ENCODE measurements at regions of chr17 and their contacts with region 1.

Region 1: GRCh38 chr17:43576563-43577229 is 30.6 kb upstream of the ETV4 start:
- DNase-seq: peak; percentile 39 to 82 (median 68)
- ATAC-seq: peak; percentile 82 to 89 (median 86)
- H3K4me3 ChIP-seq: no peak overlapping the region
- H3K27ac ChIP-seq: no peak overlapping the region
- H3K4me1 ChIP-seq: peaks cover 0 to 2% (median 0%) of the 10 kb centered on the region in 3 donors
- H3K27me3 ChIP-seq: no peaks in the 10 kb centered on the region
- CTCF ChIP-seq: peak; percentile 80 to 91 (median 83)

Region 2: DNA sequence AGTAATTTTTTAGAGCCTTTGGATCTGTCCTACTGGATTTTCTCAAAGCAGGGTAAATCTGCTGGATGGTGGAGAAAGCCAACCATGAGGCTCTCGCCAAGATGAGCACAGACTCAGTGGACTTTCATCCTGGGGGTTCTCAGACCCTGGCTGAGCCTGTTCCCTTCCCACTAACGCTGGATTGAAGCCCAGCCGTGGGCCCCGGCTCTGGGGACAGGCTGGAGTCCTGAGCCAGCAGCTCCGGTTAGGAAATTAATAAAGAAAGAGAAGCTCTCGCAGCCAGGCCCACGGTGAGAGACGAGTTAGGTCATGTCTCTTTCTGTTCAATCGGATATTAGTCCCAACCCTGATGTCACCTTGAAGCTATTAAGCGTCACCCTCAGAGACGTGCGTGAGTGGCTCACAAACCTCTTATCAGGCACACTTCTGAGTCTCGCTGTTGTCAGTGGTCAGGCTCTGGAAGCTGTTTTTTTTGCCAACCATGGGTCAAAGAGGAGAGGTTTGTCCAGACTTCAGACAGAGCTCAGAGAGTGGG is 58.0 kb after region 1 on chr17:
- intact Hi-C with region 1: no loop called
- DNase-seq: no peak
- ATAC-seq: peak in 1 of 4 donors; percentile 29
- H3K4me3 ChIP-seq: no peak overlapping the region
- H3K27ac ChIP-seq: no peak overlapping the region
- H3K4me1 ChIP-seq: no peaks in the 10 kb centered on the region
- H3K27me3 ChIP-seq: no peaks in the 10 kb centered on the region
- CTCF ChIP-seq: no peak

Region 3: GRCh38 chr17:43676471-43676870 is 99.8 kb after region 1 on chr17:
- intact Hi-C with region 1: loop called in 1 of 3 experiments (anchors 2 kb)
- DNase-seq: no peak
- ATAC-seq: no peak
- H3K4me3 ChIP-seq: no peak overlapping the region
- H3K27ac ChIP-seq: no peak overlapping the region
- H3K4me1 ChIP-seq: no peaks in the 10 kb centered on the region
- H3K27me3 ChIP-seq: no peaks in the 10 kb centered on the region
- CTCF ChIP-seq: no peak